ENCODE measurements at regions of chr1 and their contacts with region 1.

Region 1: DNA sequence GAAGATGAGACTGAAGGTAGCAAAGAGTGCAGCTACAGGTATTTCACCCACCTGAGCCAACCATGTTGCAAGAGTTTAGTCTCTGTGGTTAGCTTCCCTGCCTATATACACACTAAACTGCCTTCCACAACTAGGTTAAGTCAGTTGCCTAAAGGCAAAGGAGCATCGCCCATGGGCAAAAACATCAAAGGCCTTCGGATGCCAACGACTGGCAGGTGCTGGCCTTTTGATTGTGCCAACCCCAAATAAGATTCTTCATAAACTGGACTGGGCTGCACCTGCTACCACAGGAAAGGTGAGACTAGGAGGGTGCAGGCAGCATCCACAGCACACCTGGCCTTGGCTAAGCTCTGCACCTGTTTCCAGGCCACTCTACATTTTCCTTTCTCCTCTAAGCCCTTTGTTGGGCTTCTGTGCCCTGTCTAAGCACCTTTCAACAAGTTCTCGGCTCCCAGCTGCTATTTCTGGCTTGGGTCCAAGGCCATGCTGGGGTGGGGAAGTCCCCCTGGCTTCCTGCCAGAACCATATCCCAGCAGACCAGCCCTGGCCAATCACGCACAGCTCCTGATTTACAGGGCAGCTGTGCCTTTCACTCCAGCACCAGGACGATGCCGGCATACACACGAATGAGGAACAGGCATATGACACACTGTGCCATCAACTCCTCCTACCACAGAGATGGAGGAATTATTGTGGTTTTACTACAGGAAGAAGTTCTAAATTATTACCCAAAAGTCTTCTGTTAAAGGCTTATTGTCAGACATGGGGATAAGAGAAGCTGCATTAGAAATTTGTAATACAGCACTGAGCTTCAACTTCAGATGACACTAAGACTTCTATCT is 37.8 kb downstream of the TRIT1 start:
- DNase-seq: peak; percentile 76 to 89
- ATAC-seq: peak; percentile 93 to 97 (median 97)
- H3K4me3 ChIP-seq: no peak overlapping the region
- H3K27ac ChIP-seq: peak overlapping the region in 2 of 10 donors; percentile 5 to 58
- H3K4me1 ChIP-seq: peaks cover 5 to 41% (median 21%) of the 10 kb centered on the region in 9 donors
- H3K27me3 ChIP-seq: no peaks in the 10 kb centered on the region
- CTCF ChIP-seq: no peak

Region 2: DNA sequence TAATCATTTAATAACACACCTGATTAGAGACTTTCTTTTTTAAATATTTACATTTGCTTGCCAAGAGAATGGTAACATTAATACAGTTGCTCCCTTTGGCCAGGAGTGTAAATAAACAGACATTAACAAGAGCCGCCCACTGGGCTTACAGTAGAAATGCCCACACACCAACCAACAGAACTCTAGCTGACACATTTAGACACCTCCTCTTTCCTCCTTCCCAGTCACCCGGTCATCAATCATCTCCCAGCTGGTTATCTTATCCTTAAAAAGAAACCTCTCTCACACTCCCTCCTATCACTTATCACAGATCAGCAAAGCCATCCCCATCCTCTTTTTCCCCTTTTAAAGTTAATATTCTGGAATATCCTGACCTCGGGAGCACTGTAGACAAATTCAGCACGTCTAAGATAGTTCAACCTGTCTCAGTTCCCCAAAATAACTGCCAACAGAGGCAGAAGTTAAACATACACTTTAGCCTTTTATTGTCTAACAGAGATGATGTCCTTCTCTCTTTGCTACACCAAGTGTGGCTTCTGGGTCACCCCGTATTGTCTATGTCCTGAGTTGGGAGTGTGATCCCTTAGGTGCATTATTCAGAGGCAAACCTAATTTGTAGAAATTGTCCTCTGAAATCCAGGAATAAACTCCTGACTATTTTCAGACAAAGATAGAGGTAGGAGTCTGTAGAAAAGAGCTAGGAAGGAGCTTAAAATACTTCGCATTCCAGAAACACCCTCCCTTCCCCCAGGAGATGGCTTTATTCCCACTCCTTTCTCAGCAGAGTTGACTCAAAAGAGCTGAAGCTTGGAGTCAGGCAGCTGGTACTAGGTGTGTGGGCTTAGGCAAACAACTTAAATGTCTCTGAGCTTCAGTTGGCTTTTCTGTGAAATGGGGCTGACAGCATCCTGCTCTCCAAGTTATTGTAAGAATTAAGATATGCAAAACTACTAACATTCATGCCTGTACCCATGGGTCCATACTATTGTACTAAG is 47.4 kb after region 1 on chr1:
- intact Hi-C with region 1: loop called in 3 of 10 experiments (anchors 5 to 10 kb)
- DNase-seq: no peak
- ATAC-seq: no peak
- H3K4me3 ChIP-seq: no peak overlapping the region
- H3K27ac ChIP-seq: no peak overlapping the region
- H3K4me1 ChIP-seq: peaks cover 0 to 46% (median 8%) of the 10 kb centered on the region in 9 donors
- H3K27me3 ChIP-seq: peaks cover 0 to 40% (median 7%) of the 10 kb centered on the region in 7 donors
- CTCF ChIP-seq: no peak

Region 3: DNA sequence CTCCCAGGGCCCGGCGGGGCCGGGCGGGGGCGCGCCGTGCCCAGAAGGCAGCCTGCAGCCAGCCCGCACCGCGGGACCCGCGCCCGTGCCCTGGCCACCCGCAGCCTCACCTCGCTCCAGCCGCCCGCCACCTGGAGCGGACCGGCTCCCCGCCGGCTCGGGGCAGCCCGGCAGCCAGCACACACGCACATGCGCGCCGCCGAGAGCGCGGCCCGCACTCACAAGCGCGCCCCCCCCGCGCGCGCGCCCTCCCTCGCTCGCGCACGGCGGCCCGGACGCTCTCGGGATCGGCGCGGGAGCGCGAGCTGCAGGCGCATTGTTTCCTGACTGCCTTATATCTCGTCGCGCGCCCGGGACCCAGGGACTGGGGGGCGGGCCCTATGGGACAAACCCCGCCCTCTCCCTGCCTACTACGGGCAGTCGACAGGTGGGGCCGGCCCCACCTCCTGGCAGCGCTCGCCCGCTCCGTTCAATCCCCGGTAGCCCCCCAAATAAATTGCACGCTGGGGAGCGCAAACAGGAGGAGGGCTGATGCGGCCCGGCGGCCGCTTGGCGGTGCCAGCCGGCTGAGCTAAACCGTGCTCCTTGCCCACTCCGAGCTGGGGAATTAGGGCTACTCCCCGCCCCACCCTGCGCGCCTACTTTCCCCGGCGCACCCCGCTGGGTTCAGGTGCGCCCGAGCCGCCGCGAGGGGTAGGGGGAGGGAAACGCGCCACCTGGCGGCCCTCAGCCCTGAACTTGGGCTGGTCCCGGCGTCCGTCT is 56.4 kb after region 1 on chr1 and contains the start of gene MYCL:
- intact Hi-C with region 1: loop called in 3 of 10 experiments (anchors 5 to 10 kb)
- DNase-seq: peak; percentile 52 to 66
- ATAC-seq: peak; percentile 77 to 91 (median 86)
- H3K4me3 ChIP-seq: peak within 1 kb of the TSS; percentile 43 to 75 (median 64)
- H3K27ac ChIP-seq: peak within 1 kb of the TSS in 2 of 10 donors; percentile 9 to 64
- H3K4me1 ChIP-seq: peaks cover 3 to 19% (median 16%) of the 10 kb centered on the region in 9 donors
- H3K27me3 ChIP-seq: peaks cover 0 to 71% (median 55%) of the 10 kb centered on the region in 7 donors
- CTCF ChIP-seq: peak; percentile 43 to 81 (median 75)
- total RNA-seq, gene MYCL: 0.30 to 2.5 (median 0.76) TPM